GM18951 (cell line): ENCODE measurements at regions of chr6 and their contacts with region 1.

Region 1: DNA sequence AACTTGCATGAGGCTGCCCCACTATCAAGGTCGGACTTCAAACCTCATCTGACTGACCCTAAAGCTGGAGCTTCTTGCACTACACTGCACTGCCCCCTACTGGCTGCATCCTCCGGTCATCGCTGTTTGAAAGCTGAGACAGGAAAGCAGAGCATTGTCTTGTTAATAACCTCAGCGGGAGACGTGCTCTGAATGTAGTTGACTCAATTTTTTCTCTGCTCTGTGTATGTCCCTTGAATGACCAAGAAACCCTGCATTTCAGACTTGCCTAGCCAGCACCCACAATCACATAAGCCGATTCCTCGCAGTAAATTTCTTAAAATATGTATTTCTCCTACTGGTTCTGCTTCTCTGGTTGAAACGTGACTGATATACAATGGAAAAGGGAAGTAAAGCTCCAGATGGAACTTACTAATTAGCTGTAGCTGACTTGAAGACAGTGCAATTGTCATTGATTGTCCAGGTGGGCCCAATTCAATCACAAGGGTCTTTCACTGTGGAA is 27.8 kb downstream of the TCF21 start:
- POLR2A ChIP-seq: no peak

Region 2: DNA sequence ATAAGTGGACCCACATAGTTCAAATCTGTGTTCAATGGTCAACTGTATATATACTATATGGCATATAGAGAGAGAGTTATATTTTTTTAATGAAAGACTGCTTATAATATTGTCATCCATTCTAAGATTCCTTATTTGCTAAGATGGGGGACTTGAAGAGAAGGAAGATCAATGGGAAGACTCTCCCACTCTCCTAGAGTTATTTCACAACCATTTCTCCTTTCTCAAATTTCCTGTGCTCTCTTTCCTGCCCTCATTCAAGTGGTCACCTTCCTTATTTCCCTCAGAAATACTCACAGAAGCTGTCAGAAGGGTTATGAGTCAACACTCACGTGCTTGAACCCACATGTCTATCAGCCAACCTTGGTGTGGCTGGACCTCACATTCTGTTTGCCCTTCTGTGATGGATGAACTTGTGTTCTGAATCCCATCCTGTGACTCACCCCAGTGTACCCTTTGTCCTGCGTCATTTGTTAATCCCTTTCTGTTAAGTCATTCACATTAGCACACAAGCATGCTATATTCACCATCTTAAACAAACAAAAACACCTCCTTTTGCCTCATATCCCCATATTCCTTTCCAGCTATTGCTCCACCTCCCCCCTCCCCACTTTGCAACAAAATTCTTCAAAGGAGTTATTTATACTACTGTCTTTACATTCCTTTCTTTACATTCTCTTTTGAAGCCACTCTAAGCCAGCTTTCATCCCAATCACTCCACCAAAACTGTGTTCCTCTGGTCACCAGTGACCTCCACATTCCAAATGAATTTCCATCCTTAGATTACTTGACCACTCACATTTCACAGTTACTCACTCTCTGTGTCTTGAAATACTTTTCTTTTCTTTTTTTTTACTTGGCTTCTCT is 307.1 kb before region 1 on chr6:
- in situ Hi-C with region 1: loop called (anchors 25 kb)
- POLR2A ChIP-seq: no peak